ENCODE measurements at regions of chr15 and their contacts with region 1.

Region 1: DNA sequence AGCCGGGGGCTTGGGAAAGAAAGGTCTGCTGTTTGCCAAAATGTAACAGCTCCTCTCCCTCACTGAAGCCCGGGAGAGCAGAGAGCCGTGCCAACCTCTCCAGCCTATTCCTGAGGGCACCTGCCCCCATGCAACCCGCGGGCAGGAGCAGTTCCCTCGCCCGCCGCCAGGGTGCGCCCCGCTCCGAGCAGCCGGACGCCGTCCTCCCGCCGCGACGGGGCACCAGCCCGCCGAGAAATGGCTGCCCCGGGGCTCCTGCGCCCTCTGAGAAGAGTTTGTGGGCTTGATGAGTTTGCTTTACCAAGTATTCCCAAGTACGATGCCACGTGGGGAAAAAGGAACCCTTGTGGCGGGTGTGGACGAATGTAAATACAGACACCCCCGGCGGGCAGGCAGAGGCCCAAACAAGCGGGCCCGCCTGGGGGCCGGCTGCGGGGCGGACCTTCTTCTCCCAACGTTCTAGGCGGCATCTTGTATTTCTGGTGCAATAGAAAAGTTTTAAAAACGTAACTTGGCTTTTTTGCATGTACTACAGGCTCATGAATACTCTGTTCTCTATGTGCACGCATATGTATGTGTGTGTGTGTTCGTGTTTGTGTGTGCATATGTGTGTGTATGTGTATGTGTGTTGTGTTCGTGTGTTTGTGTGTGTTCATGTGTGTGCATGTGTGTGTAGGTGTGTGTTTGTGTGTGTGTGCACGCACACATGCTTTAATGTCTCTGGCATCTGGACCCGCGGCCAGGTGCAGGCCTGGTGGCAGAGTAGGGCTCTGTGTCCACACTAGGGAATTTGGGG is 162.9 kb downstream of the CHSY1 start:
- DNase-seq: peak; percentile 71
- H3K4me3 Mint-ChIP-seq: no peak overlapping the region
- H3K27ac Mint-ChIP-seq: no peak overlapping the region
- H3K4me1 Mint-ChIP-seq: peaks cover 10% of the 10 kb centered on the region
- H3K27me3 Mint-ChIP-seq: peaks cover 4% of the 10 kb centered on the region

Region 2: DNA sequence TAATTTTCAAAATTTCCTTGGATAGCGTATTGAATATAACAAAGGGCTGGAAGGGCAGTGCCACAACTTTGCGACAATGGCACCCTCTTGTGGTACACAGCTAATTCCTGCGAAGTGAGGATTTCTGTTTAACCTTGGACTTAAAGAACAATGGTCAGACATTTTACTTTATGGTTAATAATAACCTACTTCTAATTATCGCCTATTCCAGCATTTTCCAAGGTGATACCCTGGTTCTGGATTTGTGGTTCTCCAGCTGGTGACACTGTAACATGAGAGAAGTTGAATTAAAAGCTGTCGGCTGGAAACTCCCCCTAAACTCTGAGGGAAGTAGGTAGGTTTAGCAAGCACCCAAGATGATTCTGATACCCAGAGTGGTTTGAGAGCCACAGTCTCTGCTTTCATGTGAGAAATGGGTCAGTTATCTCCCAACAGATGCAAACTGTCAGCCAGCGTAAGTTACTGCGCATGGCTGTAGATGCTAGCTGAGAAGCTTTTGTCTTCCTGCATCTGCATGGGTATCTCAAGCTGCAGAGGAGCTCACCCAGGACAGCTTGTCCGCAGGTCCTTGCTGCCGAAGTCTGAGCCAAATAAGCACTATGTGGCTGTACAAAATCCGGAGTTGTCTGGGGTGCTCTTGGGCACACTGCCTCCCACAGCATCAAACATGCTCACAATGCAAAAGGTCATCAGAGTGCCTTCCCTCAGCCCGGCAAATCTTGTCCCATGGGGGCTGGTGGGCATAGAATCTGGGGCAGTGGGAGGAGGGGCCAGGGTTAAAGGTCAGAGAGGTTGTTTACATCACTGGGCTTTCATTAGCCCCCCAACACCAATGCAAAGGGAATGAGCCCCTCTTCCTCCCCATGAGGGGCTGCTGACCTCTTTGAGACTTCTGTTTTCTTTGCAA is 169.5 kb after region 1 on chr15:
- intact Hi-C with region 1: loop called (anchors 1 kb)
- DNase-seq: peak; percentile 36
- H3K4me3 Mint-ChIP-seq: no peak overlapping the region
- H3K27ac Mint-ChIP-seq: no peak overlapping the region
- H3K4me1 Mint-ChIP-seq: peaks cover 27% of the 10 kb centered on the region
- H3K27me3 Mint-ChIP-seq: peaks cover 16% of the 10 kb centered on the region